ENCODE measurements at regions of chr12 and their contacts with region 1.

Region 1: DNA sequence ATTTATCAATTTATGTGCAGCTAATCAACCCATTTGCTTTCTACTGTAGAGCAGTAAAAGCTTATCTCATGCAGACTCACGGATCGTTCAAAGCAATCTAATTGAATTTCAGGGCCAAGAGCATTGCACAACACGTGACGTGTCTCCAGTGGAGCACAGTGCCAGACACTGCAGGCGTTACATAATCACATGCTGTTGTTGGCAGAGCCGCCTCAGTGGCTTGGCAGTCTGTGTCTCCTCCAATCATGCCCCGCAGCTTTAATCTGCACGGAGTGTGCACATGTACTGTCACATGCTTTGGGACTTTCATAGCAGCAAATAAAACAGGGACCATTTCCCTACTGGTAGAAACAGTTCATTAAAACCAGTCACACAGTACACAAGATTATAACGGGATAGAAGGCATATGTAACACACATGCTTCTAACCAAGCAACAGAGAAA is 309.3 kb downstream of the ITPR2 start:
- DNase-seq: peak; percentile 88 to 95
- ATAC-seq: peak; percentile 100
- H3K4me3 ChIP-seq: no peak overlapping the region
- H3K27ac ChIP-seq: peak overlapping the region; percentile 64 to 77 (median 66)
- H3K4me1 ChIP-seq: peaks cover 0 to 10% of the 10 kb centered on the region in 2 donors
- H3K27me3 ChIP-seq: no peaks in the 10 kb centered on the region
- CTCF ChIP-seq: peak in 2 of 5 experiments; percentile 11 to 14
- POLR2A ChIP-seq: no peak

Region 2: DNA sequence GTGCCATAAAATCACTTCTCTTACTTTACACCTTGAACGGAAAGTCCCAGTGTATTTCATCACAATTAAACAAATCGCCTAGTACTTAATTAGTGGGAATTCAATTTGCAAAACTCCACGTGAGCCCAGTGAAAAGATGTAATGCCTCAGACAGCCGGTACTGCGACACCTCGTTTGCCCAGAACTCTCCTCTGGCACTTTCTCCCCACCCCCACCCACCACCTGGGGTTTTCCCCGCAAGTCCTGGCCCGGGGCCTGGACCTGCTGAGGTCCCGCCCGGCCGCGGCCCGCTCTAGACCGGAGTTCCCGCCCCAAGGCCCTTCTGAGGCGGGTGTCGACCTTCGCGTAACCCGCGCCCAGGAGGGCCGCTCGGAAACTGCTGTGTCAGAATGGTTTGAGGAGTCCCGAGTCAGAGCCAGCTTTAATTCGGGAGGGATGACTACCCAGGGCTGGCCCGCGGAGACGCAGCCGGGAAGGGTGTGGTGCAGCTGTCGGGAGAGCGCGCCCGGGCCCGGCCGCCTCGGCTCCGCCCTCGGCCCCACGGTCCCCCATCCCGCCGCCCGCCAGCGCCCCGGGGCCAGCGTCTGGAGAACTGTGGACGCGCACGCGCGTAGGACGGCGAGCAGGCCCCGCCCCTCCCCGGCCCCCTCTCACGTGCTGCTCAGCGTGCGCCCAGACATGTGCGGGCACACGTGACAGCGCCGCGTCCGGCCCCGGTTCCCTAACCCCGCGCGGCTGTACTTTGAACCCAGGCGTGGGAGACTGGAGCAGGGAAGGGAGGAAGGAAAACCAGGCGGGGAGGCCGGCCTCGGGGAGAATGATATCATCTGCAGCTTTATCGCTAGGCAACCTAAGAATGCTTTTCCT is 409.6 kb before region 1 on chr12:
- in situ Hi-C with region 1: loop called in 1 of 4 experiments (anchors 10 kb)
- intact Hi-C with region 1: no loop called
- DNase-seq: peak; percentile 94 to 98
- ATAC-seq: peak; percentile 53 to 63
- H3K4me3 ChIP-seq: peak overlapping the region; percentile 46 to 61 (median 50)
- H3K27ac ChIP-seq: peak overlapping the region; percentile 95 to 100 (median 97)
- H3K4me1 ChIP-seq: peaks cover 80 to 84% of the 10 kb centered on the region in 2 donors
- H3K27me3 ChIP-seq: no peaks in the 10 kb centered on the region
- CTCF ChIP-seq: peak; percentile 11 to 53 (median 38)
- POLR2A ChIP-seq: peak; percentile 89 to 96

Region 3: DNA sequence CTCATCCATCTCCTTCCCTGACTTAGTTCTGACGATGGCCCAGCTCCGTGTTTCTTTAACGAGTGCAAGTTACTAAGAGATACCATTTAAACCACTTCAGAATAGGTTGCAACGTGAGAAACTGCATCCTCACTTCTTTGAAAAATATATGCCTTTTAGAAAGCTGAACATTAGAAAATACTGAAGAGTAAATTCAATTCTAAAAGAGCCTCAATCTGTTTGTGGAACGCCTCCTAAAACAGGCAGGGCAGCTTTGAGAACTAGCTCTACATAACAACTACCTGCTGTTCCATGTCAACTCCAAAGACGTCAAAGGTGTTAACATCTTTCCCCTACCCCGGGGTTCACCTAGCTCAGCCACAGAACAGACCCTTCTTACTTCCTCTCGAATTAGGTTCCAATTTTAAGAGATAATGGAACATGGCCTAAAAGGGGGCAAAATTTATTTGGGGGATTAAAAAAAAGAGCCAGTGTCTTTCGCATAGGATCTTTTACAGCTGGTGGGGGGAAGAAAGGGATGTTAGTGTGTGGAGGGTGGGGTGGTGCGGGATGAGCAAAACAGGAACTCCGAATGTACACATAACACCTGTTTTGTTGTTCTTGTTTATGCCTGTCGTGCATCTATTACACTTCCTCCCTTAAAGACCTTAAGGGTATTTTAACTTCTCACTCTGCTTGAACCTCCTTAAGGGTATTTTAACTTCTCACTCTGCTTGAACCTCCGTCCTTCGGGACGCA is 402.2 kb before region 1 on chr12:
- in situ Hi-C with region 1: loop called in 1 of 4 experiments (anchors 10 kb)
- intact Hi-C with region 1: loop called (anchors 2 kb)
- DNase-seq: no peak
- ATAC-seq: no peak
- H3K4me3 ChIP-seq: peak overlapping the region; percentile 59 to 89 (median 72)
- H3K27ac ChIP-seq: peak overlapping the region; percentile 95 to 100 (median 97)
- H3K4me1 ChIP-seq: peaks cover 50 to 51% of the 10 kb centered on the region in 2 donors
- H3K27me3 ChIP-seq: no peaks in the 10 kb centered on the region
- CTCF ChIP-seq: no peak
- POLR2A ChIP-seq: peak; percentile 18 to 25

Region 4: DNA sequence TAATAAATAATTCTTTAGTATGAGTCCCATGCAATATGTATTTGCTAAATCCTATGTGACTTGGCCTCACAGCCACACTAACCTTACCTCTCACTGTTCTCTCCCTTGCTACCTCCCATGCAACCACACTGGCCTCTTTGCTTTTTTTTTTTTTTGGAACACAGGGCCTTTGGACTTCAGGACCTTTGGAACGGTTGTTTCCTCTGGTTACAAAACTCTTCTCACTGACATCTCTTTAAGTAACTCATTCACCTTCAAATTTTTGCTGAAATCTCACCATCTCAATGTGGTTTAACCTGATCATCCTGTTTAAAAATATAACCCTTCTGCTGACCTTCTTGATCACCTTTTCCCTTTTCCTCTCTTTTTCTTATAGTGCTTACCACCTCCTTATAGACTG is 134.4 kb before region 1 on chr12:
- in situ Hi-C with region 1: no loop called
- intact Hi-C with region 1: no loop called
- DNase-seq: no peak
- ATAC-seq: no peak
- H3K4me3 ChIP-seq: no peak overlapping the region
- H3K27ac ChIP-seq: no peak overlapping the region
- H3K4me1 ChIP-seq: no peaks in the 10 kb centered on the region
- H3K27me3 ChIP-seq: no peaks in the 10 kb centered on the region
- CTCF ChIP-seq: no peak
- POLR2A ChIP-seq: no peak

Region 5: GRCh38 chr12:26773313-26774104 is 249.8 kb after region 1 on chr12:
- in situ Hi-C with region 1: no loop called
- intact Hi-C with region 1: no loop called
- DNase-seq: no peak
- ATAC-seq: peak; percentile 70 to 90
- H3K4me3 ChIP-seq: no peak overlapping the region
- H3K27ac ChIP-seq: peak overlapping the region in 1 of 4 donors; percentile 68
- H3K4me1 ChIP-seq: peaks cover 5 to 23% of the 10 kb centered on the region in 2 donors
- H3K27me3 ChIP-seq: no peaks in the 10 kb centered on the region
- CTCF ChIP-seq: no peak
- POLR2A ChIP-seq: no peak